Motor neuron (in vitro differentiated cells): ENCODE measurements at regions of chr9 and their contacts with region 1.

Region 1: GRCh38 chr9:36659500-36659899 is 86.8 kb downstream of the MELK start:
- ATAC-seq: no peak
- H3K4me3 ChIP-seq: no peak overlapping the region
- H3K27ac ChIP-seq: no peak overlapping the region
- H3K4me1 ChIP-seq: no peaks in the 10 kb centered on the region

Region 2: DNA sequence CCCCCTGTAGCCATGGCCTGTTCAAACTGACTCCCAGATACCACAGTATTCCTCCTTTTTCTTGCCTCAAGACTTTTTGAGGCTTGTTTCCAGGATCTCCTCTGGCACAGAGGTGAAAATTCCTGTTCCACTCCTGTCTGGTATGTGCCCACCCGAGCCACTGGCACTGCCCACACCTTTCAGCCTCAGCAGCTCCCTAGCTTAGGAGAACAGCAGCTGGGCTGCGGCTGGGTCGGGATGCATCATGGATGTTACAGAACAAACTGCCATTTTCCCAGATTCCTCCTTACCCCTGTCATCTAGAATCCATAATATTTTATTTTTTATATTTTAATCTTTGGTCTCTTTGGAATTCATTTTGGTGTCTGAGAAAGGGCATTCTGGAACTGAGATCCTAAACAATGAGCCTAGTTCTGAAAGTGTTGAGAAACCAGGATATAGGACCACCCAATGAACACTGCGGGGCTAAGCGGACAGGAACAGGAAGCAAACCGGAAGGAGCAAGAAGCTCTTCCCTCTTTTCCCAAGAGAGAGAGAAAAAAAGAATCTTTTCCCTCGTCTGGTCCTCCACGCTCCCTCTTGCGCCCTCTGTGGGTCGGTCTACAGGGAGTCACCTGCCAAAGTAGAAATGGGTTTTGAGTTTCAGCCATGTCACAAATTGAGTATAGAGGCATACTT is 714.0 kb before region 1 on chr9:
- in situ Hi-C with region 1: no loop called
- ATAC-seq: peak; percentile 29 to 97 (median 78)
- H3K4me3 ChIP-seq: peak overlapping the region in 2 of 5 donors; percentile 16 to 18
- H3K27ac ChIP-seq: no peak overlapping the region
- H3K4me1 ChIP-seq: peaks cover 3 to 4% of the 10 kb centered on the region in 2 donors

Region 3: DNA sequence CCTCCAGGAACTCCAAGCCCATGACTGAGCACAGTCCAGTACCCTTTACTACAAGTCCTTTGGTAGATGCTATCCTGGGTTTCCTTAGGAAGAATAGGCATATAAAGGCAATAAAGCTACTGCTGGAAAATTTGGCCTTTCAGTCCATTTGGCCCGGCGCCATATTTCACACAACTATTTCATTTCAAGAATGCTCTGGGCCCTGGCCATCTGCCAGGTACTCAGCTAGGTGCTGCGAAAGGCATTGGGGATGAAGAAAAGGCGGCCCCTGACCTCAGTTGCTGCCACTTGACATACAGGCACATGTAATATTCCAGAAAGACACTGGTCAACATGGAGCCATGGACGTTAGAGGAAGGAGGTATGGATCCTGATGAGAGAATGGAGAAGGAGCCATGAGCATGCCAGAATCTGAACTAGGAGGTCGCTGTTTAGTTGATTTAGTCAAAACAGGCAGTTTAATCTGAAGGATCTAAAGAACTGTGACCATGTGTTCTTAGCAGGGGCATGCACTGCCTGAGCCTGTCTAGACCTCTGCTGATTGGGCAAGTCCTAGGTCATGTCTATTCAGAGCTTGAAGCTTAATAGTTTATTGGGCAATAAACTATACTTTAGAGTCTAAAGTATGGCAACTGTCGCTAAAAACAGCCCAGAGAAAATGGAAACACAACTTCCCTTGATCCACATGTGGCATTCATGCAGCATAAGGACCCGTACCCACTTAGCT is 62.5 kb after region 1 on chr9:
- in situ Hi-C with region 1: loop called in 1 of 9 experiments (anchors 10 kb)
- ATAC-seq: no peak
- H3K4me3 ChIP-seq: no peak overlapping the region
- H3K27ac ChIP-seq: no peak overlapping the region
- H3K4me1 ChIP-seq: no peaks in the 10 kb centered on the region